H1 (cell line): ENCODE measurements at regions of chr1 and their contacts with region 1.

Region 1: GRCh38 chr1:201348211-201348566 is 29.3 kb downstream of the TNNT2 start:
- DNase-seq: peak; percentile 34 to 86
- H3K4me3 ChIP-seq: peak overlapping the region in 1 of 4 experiments; percentile 37; a peak in 2 of 8 replicates
- H3K27ac ChIP-seq: no peak overlapping the region
- H3K4me1 ChIP-seq: peaks cover 8 to 25% (median 12%) of the 10 kb centered on the region in 4 experiments
- H3K27me3 ChIP-seq: 0 out of 7 replicates have a peak, but pooled peaks cover 0 to 3% (median 0%) of the 10 kb centered on the region in 4 experiments
- CTCF ChIP-seq: peak; percentile 82 to 86 (median 85)
- EP300 ChIP-seq: no peak
- POLR2A ChIP-seq: no peak
- RAD21 ChIP-seq: peak; percentile 77 to 82

Region 2: DNA sequence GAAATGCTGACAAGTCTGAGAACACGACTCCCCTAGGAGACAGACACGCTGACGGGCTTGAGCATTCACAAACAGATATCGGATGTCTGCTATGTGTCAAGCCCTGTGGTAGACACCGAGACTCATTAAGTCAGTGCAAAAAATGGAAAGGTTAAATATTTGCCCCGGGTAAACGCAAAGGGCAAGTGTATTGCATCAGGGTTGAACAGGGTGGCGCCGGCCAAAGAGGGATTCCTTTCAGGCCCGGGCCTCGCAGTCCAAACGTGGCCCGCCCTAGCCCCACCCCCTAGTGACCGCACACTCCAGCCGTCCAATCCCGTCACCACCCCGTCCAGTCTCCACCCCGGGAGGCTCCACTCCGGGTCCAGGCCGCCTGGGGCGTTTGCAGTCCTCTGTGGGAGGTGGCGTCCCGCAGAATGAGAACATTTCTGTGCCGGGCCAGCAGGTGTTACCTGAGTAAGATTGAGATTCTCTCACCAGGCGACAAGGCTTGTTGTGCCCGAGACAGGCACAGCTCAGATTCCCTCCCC is 177.6 kb before region 1 on chr1:
- CTCF ChIA-PET with region 1: no interaction called
- POLR2A ChIA-PET with region 1: no interaction called
- DNase-seq: peak; percentile 60 to 86
- H3K4me3 ChIP-seq: peak overlapping the region; percentile 60 to 76 (median 72)
- H3K27ac ChIP-seq: no peak overlapping the region
- H3K4me1 ChIP-seq: peaks cover 5 to 10% (median 8%) of the 10 kb centered on the region in 4 experiments; a peak in 6 of 7 replicates
- H3K27me3 ChIP-seq: peaks cover 0 to 6% (median 4%) of the 10 kb centered on the region in 4 experiments; a peak in 3 of 7 replicates
- CTCF ChIP-seq: no peak
- EP300 ChIP-seq: no peak
- POLR2A ChIP-seq: no peak
- RAD21 ChIP-seq: no peak

Region 3: DNA sequence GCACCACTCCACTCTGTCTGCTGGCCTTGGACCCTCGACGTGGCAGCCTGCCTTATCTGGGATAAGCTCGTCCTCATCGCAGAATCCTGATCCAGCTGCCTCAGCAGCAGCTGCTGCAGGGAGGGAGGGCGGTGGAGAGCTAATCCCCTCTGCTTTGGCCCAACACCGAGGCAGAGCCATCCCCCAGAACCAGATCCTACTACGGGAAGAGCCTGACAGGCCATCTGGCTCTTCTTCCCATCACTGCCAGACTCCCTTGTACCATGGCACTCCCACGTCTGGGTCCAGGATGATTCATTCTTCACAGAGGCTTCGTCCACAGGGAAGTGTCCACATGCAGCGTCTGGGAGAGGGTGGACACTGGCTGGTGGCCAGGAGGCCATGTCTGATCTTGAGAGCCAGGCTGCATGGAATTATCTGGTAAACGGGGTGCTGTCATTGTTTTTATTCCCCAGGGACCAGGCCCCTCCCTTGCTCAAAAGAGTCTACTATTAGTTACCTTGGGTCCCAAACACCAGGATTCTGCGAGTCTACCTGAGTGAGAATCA is 79.5 kb before region 1 on chr1:
- CTCF ChIA-PET with region 1: interaction called, 127 read pairs
- POLR2A ChIA-PET with region 1: interaction called, 4 read pairs
- DNase-seq: no peak
- H3K4me3 ChIP-seq: no peak overlapping the region
- H3K27ac ChIP-seq: no peak overlapping the region
- H3K4me1 ChIP-seq: peaks cover 0 to 4% (median 0%) of the 10 kb centered on the region in 4 experiments; a peak in 2 of 7 replicates
- H3K27me3 ChIP-seq: no peaks in the 10 kb centered on the region; a peak in 1 of 7 replicates
- CTCF ChIP-seq: no peak
- EP300 ChIP-seq: no peak
- POLR2A ChIP-seq: no peak
- RAD21 ChIP-seq: no peak

Region 4: DNA sequence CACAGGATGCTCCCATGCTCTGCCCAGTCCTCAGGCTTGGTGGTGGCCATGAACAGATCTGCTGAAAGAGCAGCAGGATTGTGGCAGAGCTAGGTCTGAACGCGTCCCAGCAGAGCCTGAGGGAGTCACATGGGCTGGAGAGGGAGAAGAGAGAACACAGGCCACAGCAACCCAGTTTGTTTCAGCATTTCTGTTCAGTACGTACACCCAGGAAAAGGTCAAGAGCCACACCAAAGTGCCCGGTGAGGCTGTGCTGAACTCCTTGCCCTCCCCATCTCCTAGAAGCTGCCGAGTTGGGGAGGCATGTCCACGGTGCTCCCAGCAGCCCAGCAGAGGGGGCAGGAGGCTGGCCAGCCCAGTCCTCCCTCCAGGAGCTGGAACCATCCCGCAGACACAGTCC is 59.4 kb before region 1 on chr1:
- CTCF ChIA-PET with region 1: interaction called, 27 read pairs
- POLR2A ChIA-PET with region 1: no interaction called
- DNase-seq: no peak
- H3K4me3 ChIP-seq: no peak overlapping the region
- H3K27ac ChIP-seq: no peak overlapping the region
- H3K4me1 ChIP-seq: peaks cover 0 to 6% (median 0%) of the 10 kb centered on the region in 4 experiments; a peak in 4 of 7 replicates
- H3K27me3 ChIP-seq: peaks cover 4 to 11% (median 10%) of the 10 kb centered on the region in 4 experiments
- CTCF ChIP-seq: peak in 1 of 3 experiments; percentile 23; a peak in 1 of 4 replicates
- EP300 ChIP-seq: no peak
- POLR2A ChIP-seq: no peak
- RAD21 ChIP-seq: no peak; a peak in 1 of 4 replicates

Region 5: DNA sequence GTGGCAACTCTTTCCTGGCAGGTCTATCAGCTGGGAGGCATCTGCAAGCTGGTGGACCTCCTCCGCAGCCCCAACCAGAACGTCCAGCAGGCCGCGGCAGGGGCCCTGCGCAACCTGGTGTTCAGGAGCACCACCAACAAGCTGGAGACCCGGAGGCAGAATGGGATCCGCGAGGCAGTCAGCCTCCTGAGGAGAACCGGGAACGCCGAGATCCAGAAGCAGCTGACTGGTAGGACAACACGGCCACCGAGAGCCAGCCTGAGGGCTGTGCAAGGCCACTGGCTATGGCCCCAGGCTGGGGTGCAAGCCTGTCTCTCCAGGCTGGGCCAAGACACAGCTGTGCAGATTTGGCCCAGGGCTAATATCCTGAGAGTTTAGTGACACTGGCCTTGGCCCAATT is 30.6 kb before region 1 on chr1:
- CTCF ChIA-PET with region 1: interaction called, 95 read pairs
- POLR2A ChIA-PET with region 1: interaction called, 4 read pairs
- DNase-seq: no peak
- H3K4me3 ChIP-seq: no peak overlapping the region
- H3K27ac ChIP-seq: no peak overlapping the region
- H3K4me1 ChIP-seq: no peaks in the 10 kb centered on the region
- H3K27me3 ChIP-seq: no peaks in the 10 kb centered on the region
- CTCF ChIP-seq: no peak
- EP300 ChIP-seq: no peak
- POLR2A ChIP-seq: no peak
- RAD21 ChIP-seq: no peak

Region 6: DNA sequence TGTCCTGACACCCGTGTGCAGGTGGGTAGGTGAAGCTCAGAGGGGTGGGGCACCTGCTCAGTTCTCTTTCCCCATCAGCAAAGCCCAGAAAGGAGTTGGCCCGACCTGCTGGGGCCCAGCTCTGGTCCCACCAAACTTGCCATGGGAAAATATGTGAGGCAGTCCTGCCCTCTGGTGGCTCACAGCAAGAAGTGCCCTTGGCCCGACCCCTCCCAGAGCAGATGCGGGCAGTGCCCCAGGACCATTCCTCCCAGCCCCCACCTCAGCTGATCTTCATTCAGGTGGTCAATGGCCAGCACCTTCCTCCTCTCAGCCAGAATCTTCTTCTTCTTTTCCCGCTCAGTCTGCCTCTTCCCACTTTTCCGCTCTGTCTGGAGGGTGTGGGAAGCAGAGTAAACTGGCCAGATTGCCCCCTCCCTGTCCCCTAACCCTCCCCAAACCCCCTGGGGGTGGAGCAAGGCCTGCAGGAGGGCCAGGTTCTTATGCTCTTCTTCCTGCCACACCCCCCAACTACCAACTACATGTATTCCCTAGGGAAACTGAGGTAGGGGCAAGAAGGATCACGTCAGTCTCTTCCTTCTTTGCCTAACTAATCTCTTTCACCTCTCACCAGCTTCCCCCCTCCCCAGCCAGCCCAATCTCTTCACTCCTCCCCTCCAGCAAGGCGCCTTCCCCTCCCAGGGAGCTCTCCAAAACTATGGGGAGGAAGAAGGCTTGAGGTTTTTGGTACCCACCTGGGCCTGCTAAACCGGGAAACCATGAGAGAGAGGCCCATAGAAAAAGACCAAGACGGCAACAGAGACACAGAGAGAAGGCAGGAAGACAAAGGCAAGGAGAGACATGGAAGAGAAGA is 13.7 kb after region 1 on chr1:
- CTCF ChIA-PET with region 1: interaction called, 271 read pairs
- POLR2A ChIA-PET with region 1: interaction called, 24 read pairs
- DNase-seq: peak; percentile 56 to 88
- H3K4me3 ChIP-seq: no peak overlapping the region
- H3K27ac ChIP-seq: no peak overlapping the region
- H3K4me1 ChIP-seq: peaks cover 0 to 5% (median under 1%) of the 10 kb centered on the region in 4 experiments; a peak in 5 of 7 replicates
- H3K27me3 ChIP-seq: no peaks in the 10 kb centered on the region
- CTCF ChIP-seq: peak; percentile 94 to 96 (median 95)
- EP300 ChIP-seq: no peak
- POLR2A ChIP-seq: no peak
- RAD21 ChIP-seq: peak; percentile 98

Region 7: GRCh38 chr1:201399352-201400126 is 51.4 kb after region 1 on chr1:
- CTCF ChIA-PET with region 1: interaction called, 18 read pairs
- POLR2A ChIA-PET with region 1: no interaction called
- DNase-seq: peak; percentile 13 to 85
- H3K4me3 ChIP-seq: peak overlapping the region; percentile 51 to 74 (median 60)
- H3K27ac ChIP-seq: no peak overlapping the region
- H3K4me1 ChIP-seq: peaks cover 3 to 24% (median 16%) of the 10 kb centered on the region in 4 experiments
- H3K27me3 ChIP-seq: peaks cover 0 to 12% (median 2%) of the 10 kb centered on the region in 4 experiments; a peak in 5 of 7 replicates
- CTCF ChIP-seq: no peak
- EP300 ChIP-seq: no peak
- POLR2A ChIP-seq: peak in 1 of 2 experiments; percentile 75; a peak in 2 of 3 replicates
- RAD21 ChIP-seq: no peak